A673 (cell line): ENCODE measurements at regions of chr2 and their contacts with region 1.

Region 1: DNA sequence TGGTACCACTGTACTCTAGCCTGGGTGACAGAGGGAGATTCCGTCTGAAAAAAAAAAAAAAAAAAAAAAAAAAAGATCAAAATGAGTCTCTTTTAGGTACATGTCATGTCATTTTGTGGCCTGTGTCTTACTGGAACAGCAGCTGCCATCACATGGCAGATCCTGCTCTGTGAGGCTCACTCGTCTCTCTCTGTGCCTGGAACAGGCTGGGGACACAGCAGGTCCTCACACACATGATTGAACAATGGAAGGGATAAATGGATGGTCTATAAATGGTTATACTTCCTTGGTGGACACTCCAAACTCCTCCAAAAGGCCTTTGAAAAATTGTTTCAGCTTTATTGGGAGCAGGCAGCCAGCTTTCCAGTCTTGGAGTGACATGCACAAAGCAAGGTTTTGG is 236.2 kb upstream of the COPS8 start:
- DNase-seq: no peak
- H3K4me3 ChIP-seq: no peak overlapping the region
- H3K27ac ChIP-seq: no peak overlapping the region
- H3K4me1 ChIP-seq: no peaks in the 10 kb centered on the region
- H3K27me3 ChIP-seq: no peaks in the 10 kb centered on the region
- CTCF ChIP-seq: no peak

Region 2: GRCh38 chr2:238285653-238286089 is 1436.2 kb after region 1 on chr2:
- CTCF ChIA-PET with region 1: interaction called, 11 read pairs
- POLR2A ChIA-PET with region 1: no interaction called
- intact Hi-C with region 1: no loop called
- DNase-seq: no peak
- H3K4me3 ChIP-seq: no peak overlapping the region
- H3K27ac ChIP-seq: no peak overlapping the region
- H3K4me1 ChIP-seq: peaks cover 26% of the 10 kb centered on the region
- H3K27me3 ChIP-seq: no peaks in the 10 kb centered on the region
- CTCF ChIP-seq: no peak